Posterior vena cava (tissue), 2 donors: ENCODE measurements at regions of chr18 and their contacts with region 1.

Region 1: GRCh38 chr18:66005831-66006588 is 255.2 kb downstream of the CDH7 start:
- DNase-seq: peak; percentile 69

Region 2: DNA sequence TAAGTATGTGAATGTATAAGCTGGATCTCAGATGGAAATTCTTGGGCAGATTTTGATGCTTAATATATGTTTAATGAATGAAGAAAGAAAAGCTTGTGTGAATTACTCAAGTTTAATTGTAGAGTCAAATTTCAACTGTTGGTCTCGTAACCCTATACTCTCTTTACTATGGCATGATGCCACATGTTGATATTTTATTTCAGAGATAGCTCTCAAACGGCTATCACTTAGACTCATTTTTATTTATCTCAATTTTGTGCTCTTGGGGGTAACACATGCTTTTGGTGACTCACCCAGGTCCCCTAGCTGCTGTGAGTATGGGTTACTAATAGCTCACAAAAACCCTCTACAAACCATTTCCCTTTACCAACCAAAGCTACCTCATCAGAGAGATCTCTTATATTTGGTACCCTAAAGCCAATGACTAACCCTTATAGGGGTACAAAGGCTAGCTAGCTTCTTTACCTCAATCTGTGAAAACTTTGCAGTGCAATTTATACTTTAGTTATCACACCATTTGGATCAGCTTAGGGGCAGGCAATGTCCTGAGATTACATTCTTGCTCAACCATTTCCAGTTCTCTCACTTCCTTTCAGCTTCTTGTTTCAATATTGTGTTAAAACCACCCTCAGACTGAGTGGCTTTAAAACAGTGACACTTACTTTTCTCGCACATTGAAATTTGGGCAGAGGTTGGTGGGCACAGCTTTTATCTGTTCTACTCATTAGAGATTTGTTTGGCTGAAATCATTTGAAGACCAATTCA is 14.9 kb before region 1 on chr18:
- intact Hi-C with region 1: loop called in 1 of 2 experiments (anchors 1 kb)
- DNase-seq: no peak

Region 3: DNA sequence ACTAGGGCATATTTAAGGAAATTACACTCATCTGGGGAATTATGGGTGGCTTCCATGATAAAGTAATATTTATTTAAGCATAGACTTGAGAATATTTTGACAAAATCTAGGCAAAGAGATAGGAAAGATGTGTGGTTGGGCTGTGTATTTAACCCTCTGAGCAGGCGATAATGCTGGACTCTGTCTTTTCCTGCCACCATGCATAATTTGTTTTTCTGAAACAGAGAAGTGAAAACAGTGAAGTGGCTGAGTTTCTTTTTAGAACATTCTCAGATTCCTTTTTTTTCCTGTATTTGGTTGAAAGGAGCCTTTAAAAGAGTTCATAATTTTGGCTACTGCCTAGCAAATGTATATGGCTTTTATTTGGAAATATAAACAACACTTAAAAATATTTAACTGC is 702.6 kb after region 1 on chr18:
- intact Hi-C with region 1: loop called in 1 of 2 experiments (anchors 5 kb)
- DNase-seq: no peak